HCT116 (cell line): ENCODE measurements at regions of chr11 and their contacts with region 1.

Region 1: GRCh38 chr11:3217676-3218482 is 734 bp downstream of the MRGPRG start:
- DNase-seq: no peak
- ATAC-seq: no peak
- H3K4me3 ChIP-seq: no peak overlapping the region
- H3K27ac ChIP-seq: no peak overlapping the region
- H3K4me1 ChIP-seq: peaks cover 5 to 12% of the 10 kb centered on the region in 2 experiments
- H3K27me3 ChIP-seq: no peaks in the 10 kb centered on the region
- CTCF ChIP-seq: no peak
- POLR2A ChIP-seq: no peak
- RAD21 ChIP-seq: no peak

Region 2: GRCh38 chr11:2975594-2975993 is 242.3 kb before region 1 on chr11:
- CTCF ChIA-PET with region 1: no interaction called
- POLR2A ChIA-PET with region 1: no interaction called
- RAD21 ChIA-PET with region 1: no interaction called
- intact Hi-C with region 1: loop called (anchors 2 kb)
- DNase-seq: peak; percentile 36
- ATAC-seq: peak; percentile 96
- H3K4me3 ChIP-seq: no peak overlapping the region
- H3K27ac ChIP-seq: no peak overlapping the region
- H3K4me1 ChIP-seq: no peaks in the 10 kb centered on the region
- H3K27me3 ChIP-seq: no peaks in the 10 kb centered on the region
- CTCF ChIP-seq: peak; percentile 55 to 62 (median 59)
- POLR2A ChIP-seq: no peak
- RAD21 ChIP-seq: peak; percentile 51

Region 3: DNA sequence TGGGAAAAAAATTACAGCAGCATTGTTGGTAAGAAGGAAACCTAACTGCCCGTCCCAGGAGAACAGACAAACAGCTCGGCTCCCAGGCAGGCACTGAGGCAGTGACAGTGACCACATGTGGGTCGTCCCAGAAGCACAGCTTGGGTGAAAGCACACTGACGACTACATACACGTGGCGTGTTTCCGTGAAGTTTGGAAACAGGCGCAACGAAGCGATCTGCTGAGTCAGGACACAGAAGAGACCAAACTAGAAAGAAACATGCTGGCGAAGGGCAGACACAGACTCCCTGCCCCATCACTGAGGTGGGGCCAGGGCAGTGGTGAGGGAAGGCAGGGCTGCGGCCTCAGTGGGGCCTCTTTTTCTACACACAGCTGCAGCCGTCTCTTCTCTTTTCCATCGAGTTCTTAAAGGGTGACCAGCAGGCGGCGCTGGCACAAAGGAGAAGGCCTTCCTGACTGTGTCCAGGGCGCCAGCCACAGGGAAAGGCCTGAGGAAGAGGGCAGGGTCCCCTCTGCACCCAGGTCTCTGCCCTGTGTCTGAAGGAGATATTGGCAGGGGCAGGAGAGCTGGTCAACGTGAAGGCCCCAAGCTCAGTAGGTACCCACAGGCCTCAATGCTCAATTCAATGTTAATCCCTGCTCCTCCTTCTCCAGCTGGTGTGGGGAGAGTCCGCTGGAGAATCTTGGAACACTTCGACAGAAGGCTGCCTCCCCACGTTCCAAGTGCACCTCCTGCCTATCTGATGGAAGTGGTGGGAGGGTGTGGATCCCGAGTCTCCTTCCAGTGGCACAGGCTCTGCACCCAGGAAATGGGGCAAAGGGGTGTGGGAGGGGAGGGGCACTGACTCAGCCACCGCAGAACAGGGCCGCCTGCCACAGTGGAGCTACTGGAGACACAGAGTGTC is 180.6 kb before region 1 on chr11:
- CTCF ChIA-PET with region 1: interaction called, 3 read pairs
- POLR2A ChIA-PET with region 1: no interaction called
- RAD21 ChIA-PET with region 1: no interaction called
- intact Hi-C with region 1: loop called (anchors 2 kb)
- DNase-seq: peak; percentile 31
- ATAC-seq: peak; percentile 97
- H3K4me3 ChIP-seq: no peak overlapping the region
- H3K27ac ChIP-seq: no peak overlapping the region
- H3K4me1 ChIP-seq: no peaks in the 10 kb centered on the region; a peak in 1 of 4 replicates
- H3K27me3 ChIP-seq: no peaks in the 10 kb centered on the region
- CTCF ChIP-seq: peak; percentile 67 to 91 (median 80)
- POLR2A ChIP-seq: no peak
- RAD21 ChIP-seq: peak; percentile 81

Region 4: DNA sequence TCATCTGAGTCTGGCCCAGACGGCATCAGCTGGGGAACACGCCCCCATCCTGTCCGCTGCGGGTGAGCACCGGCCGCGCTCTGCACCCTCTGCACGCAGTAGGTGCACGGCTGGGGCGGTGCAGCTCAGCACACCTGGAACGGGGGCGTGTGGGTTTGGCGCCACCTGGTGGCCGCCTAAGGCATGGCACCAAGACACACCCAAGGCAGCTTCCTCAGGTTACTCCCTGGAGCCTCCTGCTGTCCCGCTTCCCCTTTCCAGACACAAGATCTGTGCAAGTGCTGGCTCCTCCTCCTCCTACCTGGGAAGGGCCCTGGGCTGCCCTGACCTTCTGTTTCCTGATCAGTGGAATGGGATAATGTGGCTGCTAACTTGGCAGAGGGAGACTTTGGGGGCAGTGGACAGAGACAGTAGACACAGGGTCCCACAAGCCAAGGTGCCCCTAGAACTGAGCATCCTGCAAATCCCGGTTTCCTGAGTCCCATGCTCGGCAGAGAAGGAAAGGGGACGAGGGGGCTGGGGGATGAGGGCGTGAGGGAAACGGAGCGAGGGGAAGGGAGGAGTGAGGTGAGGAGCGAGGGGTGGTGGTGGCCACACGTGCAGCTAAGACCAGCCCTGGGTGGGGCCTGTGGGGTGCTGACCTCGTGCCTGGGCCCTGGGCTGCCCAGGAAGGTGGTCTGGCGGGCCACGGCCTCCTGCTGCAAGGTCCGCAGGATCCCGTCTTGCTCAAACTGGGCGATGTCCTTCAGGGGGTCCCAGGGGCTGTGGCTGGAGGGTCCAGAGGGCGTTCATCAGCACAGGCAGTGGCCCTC is 125.9 kb before region 1 on chr11:
- CTCF ChIA-PET with region 1: interaction called, 4 read pairs
- POLR2A ChIA-PET with region 1: no interaction called
- RAD21 ChIA-PET with region 1: no interaction called
- intact Hi-C with region 1: loop called (anchors 5 kb)
- DNase-seq: peak; percentile 67
- ATAC-seq: peak; percentile 94
- H3K4me3 ChIP-seq: no peak overlapping the region
- H3K27ac ChIP-seq: peak overlapping the region; percentile 36; the same call in 1 of the 2 replicates
- H3K4me1 ChIP-seq: peaks cover 2 to 22% of the 10 kb centered on the region in 2 experiments
- H3K27me3 ChIP-seq: no peaks in the 10 kb centered on the region
- CTCF ChIP-seq: peak; percentile 98 to 99 (median 98)
- POLR2A ChIP-seq: no peak
- RAD21 ChIP-seq: peak; percentile 96

Region 5: GRCh38 chr11:3109921-3110706 is 107.8 kb before region 1 on chr11:
- CTCF ChIA-PET with region 1: interaction called, 8 read pairs
- POLR2A ChIA-PET with region 1: no interaction called
- RAD21 ChIA-PET with region 1: no interaction called
- intact Hi-C with region 1: loop called (anchors 1 kb)
- DNase-seq: peak; percentile 37
- ATAC-seq: peak; percentile 95
- H3K4me3 ChIP-seq: no peak overlapping the region
- H3K27ac ChIP-seq: no peak overlapping the region
- H3K4me1 ChIP-seq: no peaks in the 10 kb centered on the region
- H3K27me3 ChIP-seq: no peaks in the 10 kb centered on the region
- CTCF ChIP-seq: peak; percentile 74 to 88 (median 79)
- POLR2A ChIP-seq: no peak
- RAD21 ChIP-seq: peak; percentile 86

Region 6: GRCh38 chr11:3169255-3170045 is 48.4 kb before region 1 on chr11:
- CTCF ChIA-PET with region 1: no interaction called
- POLR2A ChIA-PET with region 1: no interaction called
- RAD21 ChIA-PET with region 1: no interaction called
- intact Hi-C with region 1: loop called (anchors 1 kb)
- DNase-seq: peak; percentile 21
- ATAC-seq: peak; percentile 68
- H3K4me3 ChIP-seq: peak overlapping the region; percentile 34 to 56
- H3K27ac ChIP-seq: peak overlapping the region; percentile 43; the same call in 1 of the 2 replicates
- H3K4me1 ChIP-seq: peaks cover 17 to 25% of the 10 kb centered on the region in 2 experiments; a peak in 3 of 4 replicates
- H3K27me3 ChIP-seq: no peaks in the 10 kb centered on the region
- CTCF ChIP-seq: peak in 1 of 3 experiments; percentile 14; a peak in 1 of 6 replicates
- POLR2A ChIP-seq: no peak
- RAD21 ChIP-seq: no peak

Region 7: GRCh38 chr11:3182462-3182852 is 35.4 kb before region 1 on chr11:
- CTCF ChIA-PET with region 1: no interaction called
- POLR2A ChIA-PET with region 1: no interaction called
- RAD21 ChIA-PET with region 1: no interaction called
- intact Hi-C with region 1: no loop called
- DNase-seq: no peak
- ATAC-seq: no peak
- H3K4me3 ChIP-seq: no peak overlapping the region
- H3K27ac ChIP-seq: no peak overlapping the region
- H3K4me1 ChIP-seq: no peaks in the 10 kb centered on the region
- H3K27me3 ChIP-seq: no peaks in the 10 kb centered on the region
- CTCF ChIP-seq: no peak
- POLR2A ChIP-seq: no peak
- RAD21 ChIP-seq: no peak

Region 8: DNA sequence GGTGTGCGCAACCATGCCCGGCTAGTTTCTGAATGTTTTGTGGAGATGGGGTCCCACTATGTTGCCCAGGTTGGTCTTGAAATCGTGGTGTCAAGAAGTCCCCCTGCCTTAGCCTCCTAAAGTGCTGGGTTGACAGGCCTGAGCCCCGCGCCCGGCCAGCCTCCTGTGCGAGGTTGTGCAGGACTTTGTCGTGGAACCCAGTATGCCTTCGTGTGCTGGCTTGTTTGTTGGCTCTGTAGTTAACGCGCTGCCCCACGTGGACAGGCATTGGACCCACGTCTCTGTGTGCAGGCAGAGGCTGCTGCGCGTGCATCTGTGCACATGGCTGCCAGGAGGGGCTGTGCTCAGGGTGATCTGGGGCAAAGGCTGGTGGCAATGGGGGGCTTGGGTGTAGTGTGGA is 195.0 kb after region 1 on chr11:
- CTCF ChIA-PET with region 1: interaction called, 5 read pairs
- POLR2A ChIA-PET with region 1: no interaction called
- RAD21 ChIA-PET with region 1: no interaction called
- intact Hi-C with region 1: loop called (anchors 2 kb)
- DNase-seq: no peak
- ATAC-seq: no peak
- H3K4me3 ChIP-seq: no peak overlapping the region
- H3K27ac ChIP-seq: no peak overlapping the region
- H3K4me1 ChIP-seq: no peaks in the 10 kb centered on the region
- H3K27me3 ChIP-seq: no peaks in the 10 kb centered on the region
- CTCF ChIP-seq: no peak
- POLR2A ChIP-seq: no peak
- RAD21 ChIP-seq: no peak

Region 9: GRCh38 chr11:3685923-3686322 is 468.0 kb after region 1 on chr11:
- CTCF ChIA-PET with region 1: no interaction called
- POLR2A ChIA-PET with region 1: no interaction called
- RAD21 ChIA-PET with region 1: no interaction called
- intact Hi-C with region 1: no loop called
- DNase-seq: no peak
- ATAC-seq: no peak
- H3K4me3 ChIP-seq: no peak overlapping the region
- H3K27ac ChIP-seq: no peak overlapping the region
- H3K4me1 ChIP-seq: no peaks in the 10 kb centered on the region
- H3K27me3 ChIP-seq: no peaks in the 10 kb centered on the region
- CTCF ChIP-seq: no peak
- POLR2A ChIP-seq: no peak
- RAD21 ChIP-seq: no peak